Right ventricle myocardium superior (tissue), 1 donor: ENCODE measurements at regions of chr1 and their contacts with region 1.

Region 1: DNA sequence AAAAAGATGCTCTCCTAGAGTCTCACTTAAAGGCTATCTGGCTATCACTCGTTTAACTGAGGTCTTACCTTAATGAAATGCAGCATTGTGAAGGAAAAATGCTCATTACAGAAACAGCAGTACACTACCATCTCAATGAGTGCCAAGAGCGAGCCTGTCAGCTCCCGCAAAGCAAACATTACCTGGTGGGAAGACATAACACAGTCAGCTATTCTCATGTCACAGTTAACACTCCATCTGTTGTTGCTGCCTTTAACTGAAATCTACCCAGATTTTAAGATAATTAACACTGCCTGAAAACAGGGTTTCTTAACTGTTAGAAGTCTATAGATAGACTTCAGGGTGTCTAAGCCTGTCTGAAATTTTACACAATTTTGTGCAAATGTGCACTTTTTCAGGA is 39.1 kb downstream of the PCSK9 start:
- DNase-seq: no peak
- ATAC-seq: no peak

Region 2: GRCh38 chr1:55124470-55124869 is 46.0 kb after region 1 on chr1:
- intact Hi-C with region 1: loop called (anchors 5 kb)
- DNase-seq: no peak
- ATAC-seq: no peak

Region 3: GRCh38 chr1:55727010-55727409 is 648.5 kb after region 1 on chr1:
- intact Hi-C with region 1: no loop called
- DNase-seq: no peak
- ATAC-seq: no peak